Heart right ventricle (tissue), 16 donors: ENCODE measurements at regions of chr3 and their contacts with region 1.

Region 1: GRCh38 chr3:159763602-159764489 is 224.8 kb upstream of the IL12A start:
- DNase-seq: peak; percentile 81 to 86
- ATAC-seq: peak; percentile 72 to 88 (median 76)
- H3K4me3 ChIP-seq: peak overlapping the region; percentile 67 to 93 (median 84)
- H3K27ac ChIP-seq: peak overlapping the region; percentile 91 to 99 (median 98)
- H3K4me1 ChIP-seq: peaks cover 7 to 69% (median 44%) of the 10 kb centered on the region in 9 donors
- H3K27me3 ChIP-seq: peaks cover 0 to 42% (median 0%) of the 10 kb centered on the region in 7 donors
- CTCF ChIP-seq: peak in 8 of 9 donors; percentile 20 to 49 (median 39)

Region 2: DNA sequence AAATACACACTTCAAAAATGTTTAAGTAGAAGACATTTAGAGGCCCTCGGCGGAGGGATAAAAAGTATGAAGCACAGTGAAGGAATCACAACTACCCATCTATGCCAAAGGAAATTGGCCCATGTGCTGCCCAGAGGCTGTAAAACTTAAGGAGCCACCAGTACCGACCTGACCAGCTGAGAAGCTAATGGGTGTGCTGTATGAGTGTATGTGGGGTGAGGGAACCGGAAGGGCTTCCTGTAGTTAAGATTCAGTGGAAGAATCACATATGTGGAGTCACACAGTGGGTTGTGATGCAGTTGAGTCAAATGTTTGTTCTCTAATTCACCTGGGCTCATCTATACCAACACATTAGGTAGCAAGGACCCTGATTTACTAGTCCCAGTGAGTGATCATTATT is 291.2 kb before region 1 on chr3:
- intact Hi-C with region 1: no loop called
- DNase-seq: no peak
- ATAC-seq: no peak
- H3K4me3 ChIP-seq: no peak overlapping the region
- H3K27ac ChIP-seq: no peak overlapping the region
- H3K4me1 ChIP-seq: no peaks in the 10 kb centered on the region
- H3K27me3 ChIP-seq: no peaks in the 10 kb centered on the region
- CTCF ChIP-seq: no peak

Region 3: GRCh38 chr3:159711560-159712333 is 52.1 kb before region 1 on chr3:
- intact Hi-C with region 1: loop called in 3 of 10 experiments (anchors 5 kb)
- DNase-seq: peak in 1 of 2 donors; percentile 78
- ATAC-seq: peak; percentile 87 to 100 (median 98)
- H3K4me3 ChIP-seq: no peak overlapping the region
- H3K27ac ChIP-seq: peak overlapping the region in 9 of 10 donors; percentile 53 to 82 (median 71)
- H3K4me1 ChIP-seq: peaks cover 0 to 20% (median 12%) of the 10 kb centered on the region in 9 donors
- H3K27me3 ChIP-seq: no peaks in the 10 kb centered on the region
- CTCF ChIP-seq: no peak

Region 4: GRCh38 chr3:159796744-159797143 is 32.9 kb after region 1 on chr3:
- intact Hi-C with region 1: loop called in 6 of 10 experiments (anchors 2 to 5 kb)
- DNase-seq: no peak
- ATAC-seq: peak in 6 of 8 donors; percentile 22 to 66 (median 56)
- H3K4me3 ChIP-seq: no peak overlapping the region
- H3K27ac ChIP-seq: peak overlapping the region in 8 of 10 donors; percentile 49 to 80 (median 65)
- H3K4me1 ChIP-seq: peaks cover 10 to 94% (median 75%) of the 10 kb centered on the region in 9 donors
- H3K27me3 ChIP-seq: no peaks in the 10 kb centered on the region
- CTCF ChIP-seq: no peak

Region 5: DNA sequence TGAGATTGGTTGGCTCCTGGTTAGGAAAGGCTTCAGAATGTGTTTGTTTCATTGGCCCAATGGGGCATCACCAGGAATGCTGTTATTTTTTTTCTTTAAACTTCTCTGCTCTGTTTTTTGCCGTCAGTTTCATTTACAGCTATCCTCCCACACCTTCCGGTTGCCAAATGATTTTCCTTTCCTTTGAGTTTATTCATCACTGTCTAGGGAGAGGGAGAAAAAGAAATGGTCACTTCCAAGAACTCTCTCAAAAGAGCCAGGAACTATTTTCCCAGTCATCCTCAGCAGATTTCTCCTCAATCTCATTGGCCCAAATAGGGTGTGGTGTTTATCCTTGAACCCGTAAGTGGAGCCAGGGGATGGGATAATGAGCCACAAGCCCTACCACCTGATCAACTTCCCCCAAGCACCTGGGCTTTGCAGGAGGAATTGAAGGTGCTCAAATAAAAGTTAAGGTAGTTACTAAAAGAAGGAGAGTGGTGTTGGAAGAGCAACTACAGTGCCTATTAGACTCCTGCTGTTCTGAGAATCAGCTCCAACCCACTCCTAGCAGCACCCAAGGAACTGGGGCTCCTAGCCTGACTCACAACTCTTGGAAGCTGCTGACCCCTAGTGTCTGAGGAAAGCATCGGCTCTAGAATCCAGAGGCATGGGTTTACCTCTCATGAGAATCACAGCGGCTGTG is 41.0 kb after region 1 on chr3:
- intact Hi-C with region 1: loop called in 7 of 10 experiments (anchors 2 to 5 kb)
- DNase-seq: peak in 1 of 2 donors; percentile 82
- ATAC-seq: peak; percentile 88 to 94 (median 92)
- H3K4me3 ChIP-seq: peak overlapping the region in 1 of 10 donors; percentile 4
- H3K27ac ChIP-seq: peak overlapping the region in 8 of 10 donors; percentile 42 to 74 (median 64)
- H3K4me1 ChIP-seq: peaks cover 8 to 79% (median 57%) of the 10 kb centered on the region in 9 donors
- H3K27me3 ChIP-seq: no peaks in the 10 kb centered on the region
- CTCF ChIP-seq: peak; percentile 80 to 94 (median 86)

Region 6: GRCh38 chr3:159852821-159853505 is 89.1 kb after region 1 on chr3:
- intact Hi-C with region 1: loop called in 2 of 10 experiments (anchors 5 to 10 kb)
- DNase-seq: peak; percentile 76 to 77
- ATAC-seq: peak; percentile 66 to 88 (median 76)
- H3K4me3 ChIP-seq: peak overlapping the region in 9 of 10 donors; percentile 16 to 54 (median 46)
- H3K27ac ChIP-seq: peak overlapping the region; percentile 68 to 94 (median 90)
- H3K4me1 ChIP-seq: peaks cover 4 to 100% (median 74%) of the 10 kb centered on the region in 9 donors
- H3K27me3 ChIP-seq: no peaks in the 10 kb centered on the region
- CTCF ChIP-seq: no peak